HEK293T (cell line): ENCODE measurements at regions of chr1 and their contacts with region 1.

Region 1: GRCh38 chr1:52296345-52296744 is 69.7 kb downstream of the CC2D1B start:
- DNase-seq: peak; percentile 64

Region 2: DNA sequence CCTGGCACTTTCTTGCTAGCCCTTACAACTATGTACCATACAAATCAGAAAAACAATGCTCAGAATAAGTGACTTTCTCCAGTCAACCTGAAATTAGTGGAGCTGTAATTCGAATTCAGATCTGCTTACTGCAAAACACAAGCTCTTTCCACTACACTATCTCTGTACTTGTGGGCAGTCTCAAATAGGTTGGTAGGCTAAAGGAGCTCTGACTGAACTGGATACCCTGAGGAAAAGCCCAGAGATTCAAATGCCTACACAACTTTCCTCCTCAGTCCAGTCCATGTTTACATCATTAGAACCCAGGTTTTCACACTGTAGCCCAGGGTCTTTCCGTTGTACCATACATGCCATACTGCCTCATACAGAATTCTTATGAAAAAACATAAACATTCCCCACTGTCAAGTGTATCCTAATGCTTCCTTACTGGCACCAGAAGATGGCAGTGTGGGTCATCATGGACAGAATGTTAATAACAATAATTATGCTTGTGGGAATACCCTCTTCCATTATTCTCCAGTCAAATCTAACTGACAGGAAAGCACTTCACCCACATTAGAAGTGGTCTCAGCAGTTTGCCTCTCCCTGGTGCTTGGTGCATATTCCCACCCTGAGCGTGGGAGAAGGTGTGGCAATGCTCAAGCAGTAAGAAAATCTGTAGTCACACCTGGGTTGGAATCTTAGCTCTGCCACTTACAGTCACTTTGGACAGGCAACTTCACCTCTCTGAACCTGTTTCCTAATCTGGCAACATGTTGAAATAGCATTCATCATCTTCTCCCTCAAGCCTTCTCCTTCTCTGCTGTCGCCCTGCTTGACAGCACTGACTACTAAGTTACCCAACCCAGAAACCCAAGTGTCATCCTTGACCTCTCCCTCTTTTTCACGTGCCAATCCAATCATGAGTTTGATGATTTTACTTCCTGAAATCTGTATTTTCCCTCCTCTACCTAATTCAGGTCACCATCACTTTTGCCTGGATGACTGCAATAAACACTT is 168.9 kb before region 1 on chr1:
- CTCF ChIA-PET with region 1: interaction called, 15 read pairs
- POLR2A ChIA-PET with region 1: no interaction called
- DNase-seq: peak; percentile 55

Region 3: DNA sequence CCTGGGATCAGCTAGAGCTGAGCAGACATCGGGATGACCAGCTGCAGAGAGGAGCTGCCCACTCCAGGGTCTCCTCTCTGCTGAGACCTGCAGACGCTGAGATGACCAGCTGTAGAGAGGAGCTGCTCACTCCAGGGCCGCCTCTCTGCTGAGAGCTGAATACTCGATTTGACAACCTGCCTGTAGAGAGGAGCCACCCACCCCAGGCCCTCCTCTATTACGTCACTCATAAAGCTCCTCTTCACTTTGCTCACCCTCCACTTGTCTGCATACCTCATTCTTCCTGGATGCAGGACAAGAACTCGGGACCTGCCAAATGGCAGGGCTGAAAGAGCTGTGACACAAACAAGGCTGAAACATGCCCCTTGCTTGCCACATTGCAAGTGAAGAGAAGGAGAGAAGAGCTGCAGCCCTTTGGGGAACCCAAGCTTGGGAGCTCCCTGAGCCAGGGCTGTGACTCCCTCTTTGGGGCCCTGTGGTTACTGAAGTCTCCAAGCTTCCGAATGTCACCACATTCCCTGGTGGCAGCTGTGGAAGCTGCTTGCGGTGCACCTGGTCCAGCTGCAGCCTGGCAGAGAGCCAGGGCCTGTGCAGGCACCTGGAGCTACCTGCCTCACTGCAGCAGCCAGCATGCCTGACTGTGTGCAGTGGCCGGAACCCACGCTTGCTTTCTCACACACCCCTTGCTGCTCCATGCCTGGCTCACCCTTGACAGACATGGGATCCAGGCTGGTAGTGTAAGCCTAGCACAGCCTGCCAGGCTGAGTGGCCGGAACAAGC is 10.1 kb after region 1 on chr1:
- CTCF ChIA-PET with region 1: interaction called, 10 read pairs
- POLR2A ChIA-PET with region 1: no interaction called
- DNase-seq: no peak

Region 4: DNA sequence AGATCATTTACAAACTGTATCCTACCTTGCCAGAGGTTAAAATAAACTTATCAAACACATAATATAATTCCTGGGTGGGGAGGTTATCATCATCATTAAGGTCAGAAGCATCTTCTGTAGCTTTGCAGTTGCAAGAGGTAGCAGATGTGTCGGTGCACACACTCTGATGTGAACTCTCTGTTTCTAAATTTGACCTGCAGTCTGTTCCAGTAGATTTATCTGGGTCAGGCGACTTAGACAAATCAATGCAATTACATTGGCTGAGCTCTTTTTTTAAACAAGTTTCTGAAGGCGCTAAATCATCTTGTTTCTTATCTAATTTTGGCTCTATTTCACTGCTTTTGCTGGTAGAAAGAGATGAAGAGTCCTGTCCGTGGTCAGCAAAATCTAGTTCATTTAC is 178.5 kb after region 1 on chr1:
- CTCF ChIA-PET with region 1: no interaction called
- POLR2A ChIA-PET with region 1: no interaction called
- DNase-seq: no peak